Endothelial cell of umbilical vein (primary cell): ENCODE measurements at regions of chr7 and their contacts with region 1.

Region 1: GRCh38 chr7:85186521-85187241 is at the start of gene SEMA3D:
- DNase-seq: peak; percentile 87
- H3K4me3 ChIP-seq: peak within 1 kb of the TSS; percentile 52 to 79 (median 54)
- H3K27ac ChIP-seq: peak within 1 kb of the TSS; percentile 40
- H3K4me1 ChIP-seq: peaks cover 5% of the 10 kb centered on the region
- H3K27me3 ChIP-seq: no peaks in the 10 kb centered on the region
- CTCF ChIP-seq: peak; percentile 92 to 98
- POLR2A ChIP-seq: no peak
- total RNA-seq, gene SEMA3D: 10.3 and 14.1 TPM in 2 replicates

Region 2: DNA sequence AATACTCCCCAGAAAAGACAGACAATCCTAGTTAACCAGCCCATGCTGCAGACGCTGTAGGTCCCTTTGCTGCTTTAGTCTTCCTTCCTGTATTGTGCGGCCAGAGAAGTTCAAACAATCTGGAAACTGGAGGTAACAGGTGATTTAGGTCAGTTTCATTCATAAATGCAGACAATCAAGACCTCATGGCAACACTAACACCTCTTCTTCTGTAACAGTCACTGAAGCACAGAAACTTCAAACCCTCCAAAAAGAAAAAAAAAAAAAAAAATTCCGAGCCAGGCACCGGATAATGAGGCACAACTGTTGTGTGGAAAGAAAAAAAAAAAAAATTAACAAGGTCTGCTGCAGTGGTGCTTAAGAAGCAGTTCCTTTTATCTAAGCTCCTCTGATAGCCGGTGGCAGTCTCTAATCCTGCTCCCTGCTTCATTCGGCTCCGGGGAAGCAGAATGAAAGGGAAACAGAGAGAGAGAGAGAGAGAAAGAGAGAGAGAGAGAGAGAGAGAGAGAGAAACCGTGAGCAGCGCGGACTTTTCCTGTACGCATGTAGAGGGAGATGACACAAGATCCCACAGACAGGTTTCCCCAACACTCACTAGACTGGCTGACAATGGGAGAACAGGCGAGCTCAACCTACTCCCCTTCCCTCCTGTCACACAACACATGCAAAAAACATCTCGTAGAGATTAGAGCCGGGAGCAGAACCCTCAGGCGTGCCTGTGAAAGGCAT is 992.0 kb before region 1 on chr7 and contains the start of gene SEMA3A:
- CTCF ChIA-PET with region 1: no interaction called
- POLR2A ChIA-PET with region 1: no interaction called
- dilution Hi-C with region 1: no loop called
- intact Hi-C with region 1: loop called (anchors 10 kb)
- DNase-seq: peak; percentile 78
- H3K4me3 ChIP-seq: peak within 1 kb of the TSS; percentile 48 to 96 (median 92)
- H3K27ac ChIP-seq: peak within 1 kb of the TSS; percentile 24
- H3K4me1 ChIP-seq: peaks cover 11% of the 10 kb centered on the region
- H3K27me3 ChIP-seq: no peaks in the 10 kb centered on the region
- CTCF ChIP-seq: no peak
- POLR2A ChIP-seq: no peak
- total RNA-seq, gene SEMA3A: 1.2 and 1.7 TPM in 2 replicates

Region 3: DNA sequence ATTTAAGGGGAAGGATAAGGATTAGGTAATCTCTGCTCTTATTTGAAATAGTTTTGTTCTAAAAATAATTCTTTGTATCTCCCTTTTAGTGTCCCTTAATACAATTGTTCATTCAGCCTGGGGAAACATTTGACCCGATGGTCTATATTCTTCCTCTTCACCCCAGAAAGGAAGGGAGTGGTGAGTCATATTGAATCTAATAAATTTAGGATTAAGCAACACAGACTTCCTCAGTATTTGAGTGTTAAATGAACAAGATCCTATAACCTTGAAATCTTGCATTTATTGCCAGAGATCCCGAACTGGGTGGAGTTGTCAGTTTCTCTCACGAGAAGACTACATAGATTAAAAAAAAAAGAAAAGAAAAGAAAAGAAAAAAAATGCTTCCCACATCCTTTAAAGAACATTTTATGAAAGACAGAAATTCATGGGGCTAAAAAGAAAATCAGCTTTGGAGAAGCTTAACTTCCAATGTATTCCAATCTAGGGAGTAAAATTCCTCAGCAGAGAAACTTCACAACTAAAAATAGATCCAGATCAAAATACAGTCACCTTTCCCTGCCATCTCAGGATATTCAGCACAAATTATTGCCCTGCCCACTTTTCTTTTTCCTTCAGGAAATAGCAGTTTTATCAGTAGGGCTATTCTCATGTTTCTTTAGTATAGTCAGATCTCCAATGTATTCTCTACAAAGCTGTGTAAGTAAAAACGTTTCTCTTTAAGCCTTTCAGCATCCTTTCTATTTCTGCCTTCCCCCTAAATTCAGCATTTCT is 82.1 kb before region 1 on chr7:
- CTCF ChIA-PET with region 1: interaction called, 18 read pairs
- POLR2A ChIA-PET with region 1: interaction called, 3 read pairs
- dilution Hi-C with region 1: no loop called
- intact Hi-C with region 1: loop called (anchors 1 kb)
- DNase-seq: peak; percentile 80
- H3K4me3 ChIP-seq: peak overlapping the region in 1 of 3 experiments; percentile 45
- H3K27ac ChIP-seq: peak overlapping the region; percentile 53
- H3K4me1 ChIP-seq: peaks cover 52% of the 10 kb centered on the region
- H3K27me3 ChIP-seq: no peaks in the 10 kb centered on the region
- CTCF ChIP-seq: no peak
- POLR2A ChIP-seq: no peak

Region 4: GRCh38 chr7:85175217-85175616 is 11.5 kb before region 1 on chr7:
- CTCF ChIA-PET with region 1: interaction called, 18 read pairs
- POLR2A ChIA-PET with region 1: no interaction called
- dilution Hi-C with region 1: no loop called
- intact Hi-C with region 1: no loop called
- DNase-seq: no peak
- H3K4me3 ChIP-seq: no peak overlapping the region
- H3K27ac ChIP-seq: no peak overlapping the region
- H3K4me1 ChIP-seq: peaks cover 9% of the 10 kb centered on the region
- H3K27me3 ChIP-seq: no peaks in the 10 kb centered on the region
- CTCF ChIP-seq: no peak
- POLR2A ChIP-seq: no peak

Region 5: GRCh38 chr7:85554236-85555178 is 367.8 kb after region 1 on chr7:
- CTCF ChIA-PET with region 1: interaction called, 14 read pairs
- POLR2A ChIA-PET with region 1: no interaction called
- dilution Hi-C with region 1: no loop called
- intact Hi-C with region 1: loop called (anchors 2 kb)
- DNase-seq: peak; percentile 63
- H3K4me3 ChIP-seq: no peak overlapping the region
- H3K27ac ChIP-seq: no peak overlapping the region
- H3K4me1 ChIP-seq: no peaks in the 10 kb centered on the region
- H3K27me3 ChIP-seq: no peaks in the 10 kb centered on the region
- CTCF ChIP-seq: peak; percentile 44 to 49
- POLR2A ChIP-seq: no peak

Region 6: DNA sequence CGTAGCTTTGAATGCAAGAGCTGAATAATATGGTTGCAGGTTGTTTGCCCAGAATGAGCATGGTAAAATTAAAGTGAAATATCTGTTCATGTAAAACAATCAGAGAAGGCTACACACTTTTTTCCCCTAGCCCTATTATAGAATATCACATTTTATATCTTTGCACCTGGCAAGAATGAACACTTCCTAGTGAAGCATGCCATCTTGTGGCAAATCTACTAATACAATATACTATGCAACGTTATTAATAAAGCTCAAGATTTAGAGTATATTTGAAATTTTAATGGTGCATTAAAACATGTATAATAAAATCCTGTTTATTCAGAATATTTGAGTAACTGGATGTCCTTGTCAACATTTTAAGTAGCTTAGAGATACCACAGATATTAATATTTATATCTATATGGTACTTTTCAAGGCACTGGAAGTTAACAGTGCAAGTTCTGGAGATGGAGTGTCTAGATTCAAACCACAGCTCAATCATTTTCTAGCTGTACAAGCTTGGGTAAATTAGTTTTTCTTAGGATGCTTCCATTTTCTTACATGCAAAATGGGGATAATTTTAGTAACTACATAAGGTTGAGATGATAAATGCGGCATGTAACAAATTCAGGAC is 643.2 kb after region 1 on chr7:
- CTCF ChIA-PET with region 1: interaction called, 17 read pairs
- POLR2A ChIA-PET with region 1: no interaction called
- dilution Hi-C with region 1: no loop called
- intact Hi-C with region 1: no loop called
- DNase-seq: no peak
- H3K4me3 ChIP-seq: no peak overlapping the region
- H3K27ac ChIP-seq: no peak overlapping the region
- H3K4me1 ChIP-seq: no peaks in the 10 kb centered on the region
- H3K27me3 ChIP-seq: no peaks in the 10 kb centered on the region
- CTCF ChIP-seq: no peak
- POLR2A ChIP-seq: no peak